Endothelial cell of umbilical vein (primary cell): ENCODE measurements at regions of chr14 and their contacts with region 1.

Region 1: DNA sequence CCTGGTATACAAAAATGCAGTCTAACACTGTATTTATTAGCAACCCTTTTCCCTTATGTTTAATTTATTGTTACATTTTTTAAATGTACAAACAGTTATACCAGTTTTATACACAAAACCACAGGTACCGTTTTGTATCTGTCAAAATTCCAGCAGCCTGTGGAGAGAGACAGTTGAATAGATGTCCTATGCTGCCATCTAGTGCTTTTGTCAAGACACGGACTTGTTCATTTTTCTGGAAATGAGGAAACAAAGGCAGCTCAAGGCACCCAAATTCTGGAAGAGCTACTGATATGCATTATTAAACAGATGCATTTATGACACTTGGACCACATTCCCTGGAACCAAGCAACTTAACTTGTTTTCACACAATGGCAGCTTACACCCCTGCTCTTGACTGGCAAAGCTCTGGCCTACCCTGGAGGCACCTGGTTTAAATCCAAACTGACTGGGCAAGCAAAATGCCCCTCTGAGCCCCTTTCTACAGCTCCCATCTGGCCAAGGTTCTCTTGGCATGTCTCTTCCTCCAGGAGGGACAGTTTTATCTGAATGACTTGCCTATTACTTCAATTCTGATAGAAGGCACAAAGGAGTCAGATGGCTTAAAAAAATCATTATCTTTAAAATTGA is 286.9 kb upstream of the PRKD1 start:
- DNase-seq: peak; percentile 65
- H3K4me3 ChIP-seq: no peak overlapping the region
- H3K27ac ChIP-seq: no peak overlapping the region
- H3K4me1 ChIP-seq: peaks cover 4% of the 10 kb centered on the region
- H3K27me3 ChIP-seq: no peaks in the 10 kb centered on the region
- CTCF ChIP-seq: peak; percentile 39 to 41
- POLR2A ChIP-seq: no peak

Region 2: DNA sequence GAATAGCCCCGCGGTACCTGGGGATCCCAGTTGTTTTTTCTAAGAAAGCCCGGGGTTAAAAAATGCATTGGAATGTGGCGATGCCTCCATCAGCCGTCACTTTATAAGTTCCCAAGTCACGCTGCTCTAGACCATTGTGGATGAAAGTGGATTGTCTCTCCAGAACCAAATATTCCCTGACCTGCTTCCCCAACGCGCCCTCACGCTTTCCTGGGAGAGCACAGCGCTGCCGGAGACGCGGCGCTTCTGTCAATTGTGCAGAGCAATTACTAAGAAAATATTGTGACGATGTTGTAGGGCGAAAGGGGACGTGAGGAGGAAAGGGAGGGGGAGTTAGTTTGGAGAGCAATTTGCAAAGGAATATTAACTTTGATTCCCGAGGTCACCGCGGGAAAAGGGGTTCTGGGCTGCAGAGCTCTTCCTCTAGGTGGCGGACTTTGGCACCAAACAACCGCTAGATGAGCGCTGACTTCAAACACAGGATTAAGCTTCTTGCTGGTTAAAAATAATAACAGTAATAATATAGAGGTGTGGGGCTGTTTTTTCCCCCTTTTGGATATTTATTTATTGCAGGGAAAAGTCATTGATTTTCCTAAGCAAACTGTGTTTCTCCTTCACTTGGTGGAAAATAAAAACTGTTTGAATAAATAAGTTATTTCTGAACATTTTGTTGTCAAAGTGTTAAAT is 1457.5 kb before region 1 on chr14:
- CTCF ChIA-PET with region 1: interaction called, 51 read pairs
- POLR2A ChIA-PET with region 1: no interaction called
- dilution Hi-C with region 1: no loop called
- intact Hi-C with region 1: loop called (anchors 1 kb)
- DNase-seq: peak; percentile 34
- H3K4me3 ChIP-seq: no peak overlapping the region
- H3K27ac ChIP-seq: no peak overlapping the region
- H3K4me1 ChIP-seq: peaks cover 3% of the 10 kb centered on the region
- H3K27me3 ChIP-seq: peaks cover 66 to 84% of the 10 kb centered on the region in 2 experiments
- CTCF ChIP-seq: peak; percentile 71 to 74
- POLR2A ChIP-seq: no peak

Region 3: GRCh38 chr14:28773861-28774691 is 1440.5 kb before region 1 on chr14:
- CTCF ChIA-PET with region 1: interaction called, 22 read pairs
- POLR2A ChIA-PET with region 1: no interaction called
- dilution Hi-C with region 1: no loop called
- intact Hi-C with region 1: no loop called
- DNase-seq: no peak
- H3K4me3 ChIP-seq: no peak overlapping the region
- H3K27ac ChIP-seq: no peak overlapping the region
- H3K4me1 ChIP-seq: no peaks in the 10 kb centered on the region
- H3K27me3 ChIP-seq: peaks cover 49 to 100% of the 10 kb centered on the region in 2 experiments
- CTCF ChIP-seq: peak; percentile 23 to 36
- POLR2A ChIP-seq: no peak

Region 4: DNA sequence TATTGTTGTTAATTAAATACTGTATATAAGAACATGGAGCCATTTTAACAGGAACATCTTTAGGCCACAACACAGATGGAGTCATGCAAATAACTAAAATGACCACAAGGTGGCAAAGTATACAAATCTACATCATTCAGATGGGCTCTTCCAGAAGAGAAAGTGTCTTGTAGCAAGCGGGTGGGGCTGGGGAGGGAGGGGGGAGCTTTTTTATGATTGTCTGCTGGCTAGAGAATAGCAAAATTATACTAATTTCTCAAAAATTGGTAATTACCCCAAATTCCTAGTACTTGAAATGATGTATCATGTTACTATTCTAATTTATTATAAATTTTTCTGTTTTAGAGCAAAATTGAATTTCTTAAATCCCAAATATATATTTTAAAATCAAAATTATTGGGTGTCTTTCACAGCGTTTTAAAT is 665.6 kb before region 1 on chr14:
- CTCF ChIA-PET with region 1: interaction called, 176 read pairs
- POLR2A ChIA-PET with region 1: no interaction called
- dilution Hi-C with region 1: no loop called
- intact Hi-C with region 1: loop called (anchors 1 kb)
- DNase-seq: peak; percentile 69
- H3K4me3 ChIP-seq: no peak overlapping the region
- H3K27ac ChIP-seq: no peak overlapping the region
- H3K4me1 ChIP-seq: no peaks in the 10 kb centered on the region
- H3K27me3 ChIP-seq: peaks cover 0 to 4% of the 10 kb centered on the region in 2 experiments
- CTCF ChIP-seq: peak; percentile 27 to 41
- POLR2A ChIP-seq: no peak

Region 5: GRCh38 chr14:30193845-30194501 is 20.6 kb before region 1 on chr14:
- CTCF ChIA-PET with region 1: no interaction called
- POLR2A ChIA-PET with region 1: no interaction called
- dilution Hi-C with region 1: no loop called
- intact Hi-C with region 1: no loop called
- DNase-seq: no peak
- H3K4me3 ChIP-seq: no peak overlapping the region
- H3K27ac ChIP-seq: no peak overlapping the region
- H3K4me1 ChIP-seq: no peaks in the 10 kb centered on the region
- H3K27me3 ChIP-seq: no peaks in the 10 kb centered on the region
- CTCF ChIP-seq: no peak
- POLR2A ChIP-seq: no peak

Region 6: DNA sequence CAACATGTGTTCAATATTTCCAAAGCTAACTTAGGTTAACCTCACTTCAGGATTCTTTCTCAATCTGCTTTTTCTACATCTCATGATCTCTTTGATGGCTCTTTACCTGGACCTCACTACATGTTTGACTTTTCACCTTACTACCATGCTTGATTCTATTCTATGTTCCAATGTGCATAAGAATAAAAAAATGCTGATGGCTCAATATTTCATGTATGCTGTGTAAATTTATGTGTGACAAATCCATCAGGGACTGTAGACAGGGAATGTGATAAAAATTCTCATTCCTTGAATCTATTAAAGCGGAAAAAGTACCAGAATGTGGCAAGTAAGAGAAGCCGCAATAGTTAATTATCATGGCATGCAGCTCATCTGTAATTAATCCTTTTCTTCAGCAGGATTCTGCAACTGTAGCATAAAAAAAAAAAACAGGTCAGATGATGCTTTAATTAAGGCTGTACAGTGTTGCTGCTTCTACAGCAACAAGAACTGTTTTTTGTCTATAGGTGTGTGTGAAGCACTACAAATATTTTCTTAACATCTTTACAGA is 10.1 kb before region 1 on chr14:
- CTCF ChIA-PET with region 1: interaction called, 15 read pairs
- POLR2A ChIA-PET with region 1: no interaction called
- dilution Hi-C with region 1: no loop called
- intact Hi-C with region 1: no loop called
- DNase-seq: no peak
- H3K4me3 ChIP-seq: no peak overlapping the region
- H3K27ac ChIP-seq: no peak overlapping the region
- H3K4me1 ChIP-seq: no peaks in the 10 kb centered on the region
- H3K27me3 ChIP-seq: no peaks in the 10 kb centered on the region
- CTCF ChIP-seq: no peak
- POLR2A ChIP-seq: no peak

Region 7: DNA sequence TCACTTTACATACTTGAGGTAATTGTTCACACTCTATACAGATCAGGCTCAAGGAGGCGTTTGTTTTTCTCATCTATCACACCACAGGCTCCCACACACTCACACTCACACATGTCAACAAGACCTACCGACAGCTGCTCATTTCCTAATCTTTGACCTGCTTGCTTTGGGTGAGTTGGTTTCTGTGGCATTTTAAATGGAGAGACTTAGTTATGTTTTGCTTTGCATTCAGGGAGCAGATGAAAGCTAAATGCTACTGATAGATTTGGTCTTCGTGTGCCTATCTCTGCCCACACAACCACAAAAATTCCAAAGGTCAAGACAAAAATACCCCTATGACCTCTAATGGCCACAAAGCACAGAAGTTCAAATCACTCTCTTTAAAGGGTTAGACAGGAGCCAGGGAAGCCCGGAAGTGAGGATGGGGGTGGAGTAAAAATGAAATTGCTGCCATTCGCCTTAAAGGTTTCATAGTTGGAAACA is 140.9 kb after region 1 on chr14:
- CTCF ChIA-PET with region 1: no interaction called
- POLR2A ChIA-PET with region 1: no interaction called
- dilution Hi-C with region 1: no loop called
- intact Hi-C with region 1: no loop called
- DNase-seq: no peak
- H3K4me3 ChIP-seq: no peak overlapping the region
- H3K27ac ChIP-seq: no peak overlapping the region
- H3K4me1 ChIP-seq: no peaks in the 10 kb centered on the region
- H3K27me3 ChIP-seq: no peaks in the 10 kb centered on the region
- CTCF ChIP-seq: no peak
- POLR2A ChIP-seq: no peak